ENCODE measurements at regions of chr15 and their contacts with region 1.

Region 1: DNA sequence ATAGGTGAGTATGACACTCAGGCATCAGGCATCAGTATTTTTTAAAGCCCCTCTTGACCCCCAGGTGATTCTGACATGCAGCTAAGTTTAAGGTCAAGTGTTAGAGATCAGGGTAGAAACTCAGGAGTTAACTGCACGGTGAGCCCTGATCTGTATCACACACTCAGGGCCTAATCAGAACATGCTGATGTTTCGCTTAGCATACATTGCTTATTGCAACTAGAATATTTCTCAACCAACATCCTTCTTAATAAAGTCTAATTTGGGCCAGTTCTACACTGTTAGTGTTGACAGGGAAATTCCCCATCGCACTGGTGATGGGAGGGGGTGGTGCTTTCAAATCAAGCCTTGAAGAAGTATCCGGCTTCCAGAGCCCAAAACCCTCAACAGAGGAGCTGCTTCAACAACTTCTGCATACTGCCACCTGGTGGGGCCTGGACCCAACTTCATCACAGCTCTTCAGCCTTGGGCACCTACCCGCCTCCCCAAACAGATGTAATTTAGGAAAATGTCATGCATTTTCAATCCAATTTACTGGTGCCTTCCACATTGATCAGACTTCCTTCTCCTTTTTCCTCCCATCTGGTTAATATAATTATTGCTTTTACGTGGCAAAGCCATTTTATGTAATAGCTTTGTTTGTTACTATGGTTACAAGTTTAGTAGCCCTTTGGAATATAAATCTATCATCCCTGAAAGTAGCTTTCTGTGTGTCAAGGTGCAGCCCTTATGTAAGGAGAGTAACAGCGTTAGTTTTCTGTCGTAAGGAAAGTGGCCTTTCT is 312.2 kb downstream of the RORA start:
- DNase-seq: peak; percentile 65
- CTCF ChIP-seq: peak; percentile 81

Region 2: DNA sequence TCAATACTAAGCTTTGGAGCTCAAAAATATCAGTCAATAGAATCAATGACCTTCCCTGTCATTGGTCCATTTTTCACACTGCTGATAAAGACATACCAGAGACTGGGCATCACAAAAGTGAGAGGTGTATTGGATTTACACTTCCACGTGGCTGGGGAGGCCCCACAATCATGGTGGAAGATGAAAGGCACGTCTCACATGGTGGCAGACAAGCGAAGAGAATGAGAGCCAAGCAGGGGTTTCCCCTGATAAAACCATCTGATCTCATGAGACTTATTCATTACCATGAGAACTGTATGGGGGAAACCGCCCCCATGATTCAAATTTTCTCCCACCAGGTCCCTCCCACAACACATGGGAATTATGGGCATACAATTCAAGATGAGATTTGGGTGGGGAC is 601.0 kb before region 1 on chr15:
- in situ Hi-C with region 1: no loop called
- DNase-seq: no peak
- CTCF ChIP-seq: no peak

Region 3: DNA sequence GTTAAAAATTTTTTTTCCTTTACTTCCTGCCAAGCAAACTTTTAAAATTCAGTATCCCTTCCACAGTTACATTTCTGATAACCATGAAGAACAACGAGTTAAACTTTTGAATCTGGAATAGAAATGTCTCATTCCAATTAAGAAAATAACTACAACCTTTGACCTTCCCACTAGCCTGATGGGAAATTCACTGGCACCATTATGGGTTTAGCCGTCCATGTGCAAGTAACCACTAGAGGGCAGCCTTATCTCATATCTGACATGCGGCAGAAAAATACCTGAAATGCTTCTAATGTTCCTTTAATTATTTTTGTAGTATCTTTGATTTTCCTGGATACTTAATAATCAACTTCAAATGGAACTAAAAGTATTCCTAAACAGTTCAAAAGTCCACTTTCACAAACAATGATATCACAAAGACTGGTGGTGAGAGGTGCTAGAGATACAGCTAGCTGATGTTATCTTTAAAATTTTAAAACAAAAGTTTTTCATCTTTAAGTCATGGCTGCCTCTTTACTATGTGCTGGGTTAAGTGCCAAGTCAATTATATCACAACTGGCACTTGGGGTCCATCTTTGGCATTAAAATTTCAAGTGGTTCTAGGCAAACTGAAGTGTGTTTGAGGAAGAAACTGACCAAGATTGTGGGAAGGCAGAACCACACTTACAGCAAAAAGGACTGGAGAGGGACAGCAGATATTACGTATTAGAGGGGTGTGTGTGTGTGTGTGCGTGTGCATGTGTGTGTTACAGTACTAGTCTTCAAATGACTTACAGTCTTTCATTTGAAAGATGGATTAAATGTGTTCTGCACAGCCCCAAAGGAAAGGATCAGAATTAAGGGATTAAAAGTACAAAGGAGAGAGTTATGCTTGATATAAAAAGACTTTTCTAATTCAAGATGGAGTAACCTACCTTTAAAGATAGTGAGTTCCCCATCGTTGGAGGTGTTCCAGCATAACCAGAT is 330.8 kb before region 1 on chr15:
- in situ Hi-C with region 1: loop called (anchors 5 kb)
- DNase-seq: peak; percentile 52
- CTCF ChIP-seq: peak; percentile 83

Region 4: DNA sequence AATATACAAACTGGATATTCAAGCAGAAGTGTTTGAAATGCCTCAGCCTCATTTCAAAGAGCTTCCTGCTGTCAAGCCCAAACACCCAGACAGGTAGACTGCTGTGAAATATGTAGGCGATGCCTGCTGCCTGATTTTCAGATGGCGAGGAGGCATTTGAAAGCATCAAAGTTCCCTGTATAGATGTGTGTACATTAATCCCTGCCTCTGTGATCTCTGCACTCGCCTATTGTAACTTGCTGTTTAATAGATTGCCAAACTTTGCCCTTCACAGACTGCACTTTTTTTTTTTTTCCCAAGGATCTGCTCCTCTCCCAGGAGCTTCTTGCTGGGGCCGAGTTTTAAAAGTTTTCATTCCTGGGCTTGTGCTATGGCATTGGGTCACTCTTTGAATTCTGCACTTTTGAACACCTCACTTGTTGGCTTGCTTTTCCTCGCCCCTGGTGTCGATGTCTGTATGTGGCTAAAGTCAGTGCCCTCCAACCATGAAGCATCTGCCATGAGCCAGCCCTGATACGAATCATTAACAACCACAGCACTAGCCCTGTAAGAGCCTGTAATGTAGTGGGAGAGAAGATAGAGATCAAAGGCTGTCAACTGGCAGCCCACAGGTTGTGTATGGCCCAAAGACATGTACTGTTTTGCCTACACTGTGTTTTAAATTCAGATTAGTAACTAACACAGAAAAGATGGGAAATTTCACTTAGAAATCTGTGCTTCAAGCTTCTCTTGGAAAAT is 150.3 kb before region 1 on chr15:
- in situ Hi-C with region 1: no loop called
- DNase-seq: no peak
- CTCF ChIP-seq: no peak

Measured in GM13977 (cell line).